ENCODE measurements at regions of chr4 and their contacts with region 1.

Region 1: DNA sequence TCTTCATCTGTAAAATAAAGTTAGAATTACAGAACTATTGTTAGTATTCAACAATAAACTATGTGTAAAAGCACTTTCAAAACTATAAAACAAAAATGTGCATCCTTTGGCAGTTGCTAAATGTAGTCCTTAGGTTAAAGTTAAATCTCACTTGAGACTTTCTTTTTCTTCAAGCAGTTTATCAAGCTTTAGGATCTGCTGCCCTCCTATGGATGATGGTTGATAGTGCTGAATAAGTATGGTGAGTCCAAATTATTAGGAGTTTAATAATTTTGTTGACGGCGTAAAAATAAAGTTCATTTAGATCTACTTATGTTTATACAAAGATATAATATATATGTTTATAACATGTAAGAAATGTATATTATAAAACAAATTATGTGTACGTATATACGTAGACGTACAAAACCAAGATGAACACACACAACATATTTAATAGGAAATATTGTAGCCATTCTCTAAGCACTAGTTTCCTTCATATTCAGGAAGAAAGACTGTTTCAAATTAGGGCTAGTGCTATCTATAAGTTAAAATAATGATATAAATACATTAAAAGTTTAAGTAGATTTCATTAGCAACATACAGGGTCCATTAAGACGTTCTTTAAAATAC is 22.3 kb downstream of the UGT2A2 start:
- DNase-seq: no peak
- H3K4me3 ChIP-seq: no peak overlapping the region
- H3K27ac ChIP-seq: no peak overlapping the region
- H3K4me1 ChIP-seq: no peaks in the 10 kb centered on the region
- H3K27me3 ChIP-seq: no peaks in the 10 kb centered on the region
- CTCF ChIP-seq: peak in 2 of 4 experiments; percentile 16 to 27
- EP300 ChIP-seq: no peak
- POLR2A ChIP-seq: no peak

Region 2: DNA sequence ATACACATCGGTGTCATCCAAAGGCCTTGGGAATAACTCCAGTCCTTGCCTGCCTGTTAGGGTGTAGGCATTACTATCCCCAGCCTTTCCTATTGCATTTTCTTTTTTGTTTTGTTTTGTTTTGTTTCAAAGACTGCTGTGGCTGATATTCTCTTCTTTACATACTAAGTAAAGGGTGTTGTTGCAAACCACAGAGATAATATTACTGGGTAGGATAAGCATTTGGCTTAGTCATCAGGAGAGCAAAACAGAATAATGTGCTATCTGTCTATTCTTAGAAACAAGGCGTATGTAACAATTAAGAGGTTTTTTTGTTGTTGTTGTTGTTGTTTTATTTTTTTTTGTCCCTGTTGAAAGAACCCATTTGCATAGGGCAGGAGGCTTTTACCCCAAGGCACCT is 295.1 kb before region 1 on chr4:
- intact Hi-C with region 1: loop called (anchors 10 kb)
- DNase-seq: no peak
- H3K4me3 ChIP-seq: no peak overlapping the region
- H3K27ac ChIP-seq: no peak overlapping the region
- H3K4me1 ChIP-seq: peaks cover 0 to 16% (median 4%) of the 10 kb centered on the region in 4 donors
- H3K27me3 ChIP-seq: no peaks in the 10 kb centered on the region
- CTCF ChIP-seq: no peak
- EP300 ChIP-seq: no peak
- POLR2A ChIP-seq: no peak

Region 3: GRCh38 chr4:69524706-69525105 is 92.5 kb before region 1 on chr4:
- intact Hi-C with region 1: no loop called
- DNase-seq: no peak
- H3K4me3 ChIP-seq: no peak overlapping the region
- H3K27ac ChIP-seq: no peak overlapping the region
- H3K4me1 ChIP-seq: no peaks in the 10 kb centered on the region
- H3K27me3 ChIP-seq: no peaks in the 10 kb centered on the region
- CTCF ChIP-seq: no peak
- EP300 ChIP-seq: no peak
- POLR2A ChIP-seq: no peak

Region 4: GRCh38 chr4:70437212-70437611 is 820.0 kb after region 1 on chr4:
- intact Hi-C with region 1: no loop called
- DNase-seq: no peak
- H3K4me3 ChIP-seq: no peak overlapping the region
- H3K27ac ChIP-seq: no peak overlapping the region
- H3K4me1 ChIP-seq: no peaks in the 10 kb centered on the region
- H3K27me3 ChIP-seq: no peaks in the 10 kb centered on the region
- CTCF ChIP-seq: no peak
- EP300 ChIP-seq: no peak
- POLR2A ChIP-seq: no peak

Measured in sigmoid colon (tissue), 7 donors.